ENCODE measurements at regions of chr19 and their contacts with region 1.

Region 1: DNA sequence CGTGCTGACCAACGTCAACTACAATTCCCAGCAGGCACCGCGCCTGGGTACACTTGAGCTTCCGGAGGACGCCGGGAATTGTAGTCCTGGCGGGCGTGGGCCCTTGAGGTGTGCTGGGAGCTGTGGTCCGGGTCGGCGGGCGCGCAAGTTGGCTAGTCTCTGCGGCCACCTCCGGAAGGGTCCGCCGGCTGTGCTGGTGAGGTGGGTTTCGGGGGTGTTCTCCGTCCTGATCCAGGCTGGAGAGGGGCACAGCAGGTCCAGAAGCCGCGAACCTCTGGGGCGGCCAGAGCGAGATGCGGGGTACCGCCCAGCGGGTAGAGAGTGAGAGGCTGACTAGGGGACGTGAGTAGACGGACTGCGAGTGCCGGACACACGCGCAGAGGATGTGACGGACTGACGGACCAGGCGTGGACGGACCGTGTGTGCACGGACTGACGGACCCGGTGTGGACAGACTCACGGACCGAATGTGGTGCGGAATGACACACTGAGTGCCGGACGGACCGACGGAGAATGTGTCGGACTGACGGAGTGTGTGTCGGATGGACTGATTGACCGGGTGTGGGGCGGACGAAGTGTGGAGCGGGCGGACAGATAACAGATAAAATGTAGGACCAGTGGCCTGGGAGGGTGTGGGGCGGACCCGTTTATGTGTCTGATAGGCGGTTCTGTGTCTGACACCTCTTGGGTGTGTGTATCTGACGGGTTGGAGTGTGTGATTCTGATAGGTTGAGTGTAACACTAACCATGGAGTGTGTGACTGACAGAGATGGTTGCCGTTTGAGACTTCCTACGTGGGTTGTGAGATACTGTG is at the start of gene ZSCAN22:
- DNase-seq: peak; percentile 76 to 94 (median 86)
- ATAC-seq: peak; percentile 88
- H3K4me3 ChIP-seq: peak within 1 kb of the TSS; percentile 86
- H3K4me3 Mint-ChIP-seq: no peak within 1 kb of the TSS
- H3K27ac ChIP-seq: peak within 1 kb of the TSS; percentile 65
- H3K27ac Mint-ChIP-seq: no peak within 1 kb of the TSS
- H3K4me1 ChIP-seq: peaks cover 22% of the 10 kb centered on the region
- H3K4me1 Mint-ChIP-seq: peaks cover 4% of the 10 kb centered on the region
- H3K27me3 ChIP-seq: no peaks in the 10 kb centered on the region
- H3K27me3 Mint-ChIP-seq: no peaks in the 10 kb centered on the region
- CTCF ChIP-seq: no peak
- total RNA-seq, gene ZSCAN22: 0.77 to 0.81 TPM

Region 2: GRCh38 chr19:57819475-57820148 is 507.5 kb before region 1 on chr19:
- CTCF ChIA-PET with region 1: no interaction called
- POLR2A ChIA-PET with region 1: no interaction called
- intact Hi-C with region 1: loop called in 1 of 2 experiments (anchors 10 kb)
- DNase-seq: peak; percentile 64 to 95 (median 73)
- ATAC-seq: peak; percentile 83
- H3K4me3 ChIP-seq: peak overlapping the region; percentile 98
- H3K4me3 Mint-ChIP-seq: peak overlapping the region; percentile 96
- H3K27ac ChIP-seq: peak overlapping the region; percentile 78 to 90
- H3K27ac Mint-ChIP-seq: peak overlapping the region; percentile 92
- H3K4me1 ChIP-seq: peaks cover 29% of the 10 kb centered on the region
- H3K4me1 Mint-ChIP-seq: peaks cover 56% of the 10 kb centered on the region
- H3K27me3 ChIP-seq: no peaks in the 10 kb centered on the region
- H3K27me3 Mint-ChIP-seq: no peaks in the 10 kb centered on the region
- CTCF ChIP-seq: peak; percentile 34

Region 3: DNA sequence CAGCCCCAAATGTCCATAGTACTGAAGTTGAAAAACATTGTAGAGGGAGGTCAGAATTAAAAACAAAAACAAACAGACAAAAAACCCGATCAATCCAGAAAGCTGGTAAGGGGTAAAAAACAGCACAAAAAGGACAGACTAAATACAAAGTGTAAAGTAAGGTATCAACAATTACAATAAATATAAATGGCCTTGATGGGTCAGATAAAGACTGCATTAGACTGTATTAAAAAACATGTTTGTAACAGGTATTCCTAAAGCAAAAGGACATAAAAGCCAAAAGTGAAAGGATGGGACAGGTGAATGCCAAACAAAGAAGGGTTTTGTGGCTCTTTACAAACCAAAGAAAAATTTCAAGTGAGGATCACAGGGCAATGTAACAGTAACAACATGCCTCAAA is 192.9 kb before region 1 on chr19:
- CTCF ChIA-PET with region 1: no interaction called
- POLR2A ChIA-PET with region 1: no interaction called
- intact Hi-C with region 1: no loop called
- DNase-seq: no peak
- ATAC-seq: no peak
- H3K4me3 ChIP-seq: no peak overlapping the region
- H3K4me3 Mint-ChIP-seq: no peak overlapping the region
- H3K27ac ChIP-seq: no peak overlapping the region
- H3K27ac Mint-ChIP-seq: no peak overlapping the region
- H3K4me1 ChIP-seq: no peaks in the 10 kb centered on the region
- H3K4me1 Mint-ChIP-seq: no peaks in the 10 kb centered on the region
- H3K27me3 ChIP-seq: no peaks in the 10 kb centered on the region
- H3K27me3 Mint-ChIP-seq: no peaks in the 10 kb centered on the region
- CTCF ChIP-seq: no peak

Region 4: GRCh38 chr19:58278157-58279041 is 48.7 kb before region 1 on chr19 and contains the start of gene ZNF8:
- CTCF ChIA-PET with region 1: no interaction called
- POLR2A ChIA-PET with region 1: interaction called, 8 read pairs
- intact Hi-C with region 1: loop called in 1 of 2 experiments (anchors 2 kb)
- DNase-seq: peak; percentile 89 to 99 (median 96)
- ATAC-seq: peak; percentile 96
- H3K4me3 ChIP-seq: peak within 1 kb of the TSS; percentile 89
- H3K4me3 Mint-ChIP-seq: peak within 1 kb of the TSS; percentile 98
- H3K27ac ChIP-seq: peak within 1 kb of the TSS; percentile 81 to 85
- H3K27ac Mint-ChIP-seq: peak within 1 kb of the TSS; percentile 92
- H3K4me1 ChIP-seq: peaks cover 29% of the 10 kb centered on the region
- H3K4me1 Mint-ChIP-seq: peaks cover 45% of the 10 kb centered on the region
- H3K27me3 ChIP-seq: no peaks in the 10 kb centered on the region
- H3K27me3 Mint-ChIP-seq: no peaks in the 10 kb centered on the region
- CTCF ChIP-seq: no peak
- total RNA-seq, gene ZNF8: 9.5 to 9.6 TPM

Region 5: GRCh38 chr19:58362272-58362994 is 35.3 kb after region 1 on chr19 and contains the start of gene ZNF497:
- CTCF ChIA-PET with region 1: no interaction called
- POLR2A ChIA-PET with region 1: interaction called, 16 read pairs
- intact Hi-C with region 1: loop called (anchors 1 kb)
- DNase-seq: peak; percentile 92 to 99 (median 97)
- ATAC-seq: peak; percentile 90
- H3K4me3 ChIP-seq: peak within 1 kb of the TSS; percentile 84
- H3K4me3 Mint-ChIP-seq: peak within 1 kb of the TSS; percentile 94
- H3K27ac ChIP-seq: peak within 1 kb of the TSS; percentile 58 to 69
- H3K27ac Mint-ChIP-seq: peak within 1 kb of the TSS; percentile 84
- H3K4me1 ChIP-seq: peaks cover 22% of the 10 kb centered on the region
- H3K4me1 Mint-ChIP-seq: peaks cover 12% of the 10 kb centered on the region
- H3K27me3 ChIP-seq: no peaks in the 10 kb centered on the region
- H3K27me3 Mint-ChIP-seq: no peaks in the 10 kb centered on the region
- CTCF ChIP-seq: no peak
- total RNA-seq, gene ZNF497: 0.28 to 0.55 TPM

Region 6: GRCh38 chr19:58380722-58381466 is 53.8 kb after region 1 on chr19 and contains the start of gene ZNF837:
- CTCF ChIA-PET with region 1: no interaction called
- POLR2A ChIA-PET with region 1: no interaction called
- intact Hi-C with region 1: loop called (anchors 1 kb)
- DNase-seq: peak; percentile 93 to 100 (median 97)
- ATAC-seq: peak; percentile 83
- H3K4me3 ChIP-seq: peak within 1 kb of the TSS; percentile 82
- H3K4me3 Mint-ChIP-seq: peak within 1 kb of the TSS; percentile 92
- H3K27ac ChIP-seq: peak within 1 kb of the TSS; percentile 81 to 92
- H3K27ac Mint-ChIP-seq: peak within 1 kb of the TSS; percentile 86
- H3K4me1 ChIP-seq: peaks cover 43% of the 10 kb centered on the region
- H3K4me1 Mint-ChIP-seq: peaks cover 33% of the 10 kb centered on the region
- H3K27me3 ChIP-seq: no peaks in the 10 kb centered on the region
- H3K27me3 Mint-ChIP-seq: no peaks in the 10 kb centered on the region
- CTCF ChIP-seq: no peak
- total RNA-seq, gene ZNF837: 0.71 to 1.0 TPM

Region 7: DNA sequence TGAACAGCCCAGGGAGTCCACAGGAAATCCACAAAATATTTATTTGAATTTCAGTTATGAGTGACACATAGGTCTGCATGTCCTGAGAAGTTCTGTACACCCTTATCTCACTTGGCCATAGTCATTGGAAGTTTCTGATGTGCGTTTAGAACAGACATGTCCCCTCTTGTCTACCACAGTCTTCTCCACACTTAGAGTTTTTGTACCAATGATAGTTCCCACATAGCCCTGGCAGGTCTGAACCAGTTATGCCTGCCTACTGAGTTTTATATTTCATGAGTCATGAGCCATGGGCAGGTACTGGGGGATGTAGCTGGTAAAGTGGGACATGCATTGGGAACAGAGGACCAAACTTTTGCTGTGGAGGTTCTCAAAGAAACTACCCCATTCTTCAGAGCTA is 101.5 kb after region 1 on chr19:
- CTCF ChIA-PET with region 1: no interaction called
- POLR2A ChIA-PET with region 1: no interaction called
- intact Hi-C with region 1: no loop called
- DNase-seq: no peak
- ATAC-seq: no peak
- H3K4me3 ChIP-seq: no peak overlapping the region
- H3K4me3 Mint-ChIP-seq: no peak overlapping the region
- H3K27ac ChIP-seq: no peak overlapping the region
- H3K27ac Mint-ChIP-seq: no peak overlapping the region
- H3K4me1 ChIP-seq: no peaks in the 10 kb centered on the region
- H3K4me1 Mint-ChIP-seq: no peaks in the 10 kb centered on the region
- H3K27me3 ChIP-seq: no peaks in the 10 kb centered on the region
- H3K27me3 Mint-ChIP-seq: no peaks in the 10 kb centered on the region
- CTCF ChIP-seq: no peak

Region 8: DNA sequence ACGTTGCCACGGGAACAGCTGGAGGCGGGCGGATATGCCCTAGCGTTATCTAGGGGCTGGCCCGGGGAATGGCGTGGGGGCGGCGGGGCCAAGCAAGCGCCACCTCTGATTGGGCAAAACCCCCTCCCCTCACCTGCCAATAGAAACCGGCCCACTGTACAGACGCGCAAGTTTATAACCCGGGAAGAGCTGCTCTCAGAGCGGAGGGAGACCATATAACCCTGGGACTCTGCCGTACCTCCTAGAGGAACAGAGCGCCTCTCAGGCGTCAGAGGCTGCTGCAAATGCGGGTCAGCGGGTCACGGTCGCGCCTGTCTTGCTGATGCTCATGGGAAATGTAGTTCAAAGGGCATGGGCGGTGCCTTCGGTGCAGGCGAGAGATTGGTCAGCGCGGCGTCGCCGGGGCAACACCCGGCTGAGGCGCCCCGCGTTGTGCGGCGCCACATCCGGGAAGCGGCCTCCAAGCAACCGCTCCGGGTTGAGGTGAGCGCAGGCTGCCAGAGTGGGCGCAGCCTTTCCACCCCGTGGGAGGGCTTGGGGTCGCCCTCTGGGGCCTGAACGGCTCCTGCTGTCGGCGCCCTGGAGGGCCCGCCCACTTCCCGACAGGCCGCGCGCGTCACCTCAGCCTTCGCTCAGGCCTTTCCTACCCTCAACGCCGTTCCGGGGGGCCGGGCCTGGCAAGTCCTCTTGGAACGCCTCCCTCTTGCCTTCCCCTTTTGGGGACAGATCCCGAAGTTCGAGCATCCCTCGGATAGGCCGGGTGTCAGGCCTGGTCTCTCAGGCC is 148.8 kb after region 1 on chr19 and contains the start of gene ZNF446:
- CTCF ChIA-PET with region 1: no interaction called
- POLR2A ChIA-PET with region 1: no interaction called
- intact Hi-C with region 1: loop called in 1 of 2 experiments (anchors 5 kb)
- DNase-seq: peak; percentile 90 to 99 (median 94)
- ATAC-seq: peak; percentile 82
- H3K4me3 ChIP-seq: peak within 1 kb of the TSS; percentile 87
- H3K4me3 Mint-ChIP-seq: peak within 1 kb of the TSS; percentile 90
- H3K27ac ChIP-seq: peak within 1 kb of the TSS; percentile 76 to 95
- H3K27ac Mint-ChIP-seq: peak within 1 kb of the TSS; percentile 95
- H3K4me1 ChIP-seq: peaks cover 22% of the 10 kb centered on the region
- H3K4me1 Mint-ChIP-seq: peaks cover 23% of the 10 kb centered on the region
- H3K27me3 ChIP-seq: no peaks in the 10 kb centered on the region
- H3K27me3 Mint-ChIP-seq: no peaks in the 10 kb centered on the region
- CTCF ChIP-seq: no peak
- total RNA-seq, gene ZNF446: 13.6 to 14.6 TPM

Measured in CD4-positive, alpha-beta T cell (primary cell).